Motor neuron (in vitro differentiated cells): ENCODE measurements at regions of chr2 and their contacts with region 1.

Region 1: DNA sequence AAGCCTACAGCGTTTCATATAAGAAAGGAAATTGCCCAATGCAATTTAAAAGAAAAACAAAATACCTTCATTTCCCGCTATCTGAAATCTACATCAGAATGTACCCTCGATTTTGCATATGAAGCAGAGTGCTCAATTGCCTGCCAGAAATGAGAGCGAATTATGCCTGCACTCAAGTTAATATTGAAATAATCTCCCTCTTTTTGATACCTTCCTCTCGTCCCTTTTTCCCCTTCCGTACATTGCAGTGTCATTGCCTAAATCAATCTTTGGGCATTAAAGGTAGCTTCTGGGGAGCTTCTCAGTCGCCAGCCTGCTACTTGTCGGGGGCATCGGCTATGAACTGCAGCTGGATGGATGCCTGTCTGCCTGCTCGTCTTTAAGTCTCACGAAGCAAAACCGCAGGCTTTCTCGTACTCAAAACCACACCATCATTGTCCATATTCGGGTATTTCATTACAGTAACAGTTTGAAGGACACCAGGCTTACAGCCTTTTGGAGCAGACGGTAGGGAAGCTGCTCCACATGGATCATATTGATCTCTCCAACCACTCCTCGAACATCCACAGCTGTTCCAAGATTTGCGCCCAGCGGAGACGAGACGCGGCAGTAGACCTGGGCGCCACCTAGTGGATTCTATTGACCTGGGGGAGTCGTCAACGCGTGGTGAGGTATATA is 64.0 kb upstream of the HNRNPA3 start:
- ATAC-seq: peak; percentile 99 to 100 (median 100)
- H3K4me3 ChIP-seq: peak overlapping the region; percentile 32 to 43 (median 34)
- H3K27ac ChIP-seq: no peak overlapping the region
- H3K4me1 ChIP-seq: peaks cover 2 to 21% of the 10 kb centered on the region in 2 donors

Region 2: GRCh38 chr2:176126929-176127773 is 1021.5 kb before region 1 on chr2:
- in situ Hi-C with region 1: loop called (anchors 10 to 25 kb)
- ATAC-seq: no peak
- H3K4me3 ChIP-seq: peak overlapping the region; percentile 55 to 99 (median 80)
- H3K27ac ChIP-seq: no peak overlapping the region
- H3K4me1 ChIP-seq: peaks cover 16 to 21% of the 10 kb centered on the region in 2 donors

Region 3: GRCh38 chr2:176638167-176639015 is 510.2 kb before region 1 on chr2:
- in situ Hi-C with region 1: loop called in 1 of 9 experiments (anchors 25 kb)
- ATAC-seq: peak; percentile 65 to 96 (median 90)
- H3K4me3 ChIP-seq: peak overlapping the region; percentile 46 to 56 (median 49)
- H3K27ac ChIP-seq: no peak overlapping the region
- H3K4me1 ChIP-seq: peaks cover 0 to 22% of the 10 kb centered on the region in 2 donors

Region 4: DNA sequence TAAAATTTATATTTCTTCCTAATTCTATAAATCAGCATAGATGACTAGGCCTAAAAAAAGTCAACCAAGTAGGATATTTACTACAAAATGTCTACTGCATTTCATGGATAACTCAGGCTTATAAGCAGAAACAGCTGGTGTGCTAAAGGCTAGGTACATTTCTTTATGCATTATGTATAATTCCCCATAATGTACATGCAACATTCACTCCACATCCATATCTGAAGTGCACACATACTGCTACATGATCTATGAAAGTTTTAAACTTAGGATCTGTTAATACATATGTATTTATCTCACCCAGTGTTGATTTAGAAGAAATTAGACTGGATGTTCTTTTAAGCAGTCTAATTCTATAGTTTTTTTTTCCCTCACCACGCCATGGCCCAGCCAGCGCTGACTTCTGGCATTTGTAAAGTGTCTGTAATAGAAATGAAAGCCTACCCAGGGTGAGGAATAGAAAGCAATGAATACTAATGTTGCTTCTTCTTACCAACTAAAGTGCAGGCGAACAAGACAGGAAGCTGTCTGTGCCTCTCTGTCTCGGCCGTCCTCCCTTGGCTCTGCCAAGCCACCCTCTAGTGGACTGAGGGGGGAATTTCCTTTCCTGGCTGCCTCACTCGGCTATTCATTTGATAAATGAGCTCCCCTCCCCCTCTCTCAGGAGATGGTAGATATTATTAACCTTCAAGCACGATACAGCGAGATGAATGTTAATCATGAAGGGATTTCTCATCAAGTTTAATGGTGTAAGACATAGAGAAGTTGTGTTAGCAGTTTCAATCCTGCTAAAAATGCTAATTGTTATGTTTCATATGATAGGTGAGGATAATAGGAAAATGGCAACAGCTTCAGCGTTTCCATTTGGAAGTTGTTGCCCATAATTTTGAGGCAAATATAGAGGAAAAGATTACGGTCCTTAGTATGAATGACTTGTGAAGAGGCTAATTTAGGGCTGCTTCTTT is 494.9 kb before region 1 on chr2:
- in situ Hi-C with region 1: loop called in 6 of 9 experiments (anchors 25 kb)
- ATAC-seq: peak; percentile 88 to 97 (median 93)
- H3K4me3 ChIP-seq: no peak overlapping the region
- H3K27ac ChIP-seq: no peak overlapping the region
- H3K4me1 ChIP-seq: peaks cover 4 to 17% of the 10 kb centered on the region in 2 donors

Region 5: DNA sequence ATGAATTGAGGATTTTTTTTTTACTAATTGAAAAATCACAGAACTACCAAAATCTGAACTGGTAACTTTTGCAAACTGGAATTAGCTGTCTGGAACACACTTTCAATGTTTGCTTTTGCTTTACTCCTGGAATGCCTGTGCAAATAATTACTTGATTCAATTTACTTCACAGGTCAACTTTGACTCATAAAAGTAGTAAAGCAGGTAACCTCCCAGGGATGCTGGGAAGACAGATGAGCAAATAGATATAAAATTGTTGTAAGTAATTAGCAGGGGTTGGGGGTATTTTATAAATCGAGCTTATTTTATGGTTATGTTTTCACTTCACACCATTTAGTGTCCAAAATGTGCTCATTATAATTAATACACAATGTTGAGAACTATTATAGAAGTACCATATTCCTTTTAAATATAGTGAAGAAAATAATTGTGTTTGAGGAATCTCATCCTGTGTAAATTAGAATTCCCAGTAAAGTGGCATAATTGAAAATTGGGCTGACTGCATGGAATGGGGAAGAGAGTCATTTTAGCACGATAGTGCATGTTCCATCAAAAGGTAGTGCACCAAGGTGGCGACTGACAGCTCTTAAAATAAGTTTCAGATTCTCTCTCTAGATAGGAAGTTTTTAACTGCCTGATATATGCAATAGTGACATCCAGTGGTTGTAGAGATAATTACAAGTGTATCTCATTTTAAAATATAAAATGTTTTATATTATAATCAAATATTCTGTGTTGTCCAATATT is 334.1 kb before region 1 on chr2:
- in situ Hi-C with region 1: loop called in 2 of 9 experiments (anchors 25 kb)
- ATAC-seq: no peak
- H3K4me3 ChIP-seq: no peak overlapping the region
- H3K27ac ChIP-seq: no peak overlapping the region
- H3K4me1 ChIP-seq: peaks cover 33 to 40% of the 10 kb centered on the region in 2 donors

Region 6: GRCh38 chr2:176830362-176830761 is 318.3 kb before region 1 on chr2:
- in situ Hi-C with region 1: loop called in 4 of 9 experiments (anchors 25 kb)
- ATAC-seq: peak in 5 of 8 experiments; percentile 27 to 69 (median 45)
- H3K4me3 ChIP-seq: no peak overlapping the region
- H3K27ac ChIP-seq: no peak overlapping the region
- H3K4me1 ChIP-seq: peaks cover 6 to 15% of the 10 kb centered on the region in 2 donors